Body of pancreas (tissue), 4 donors: ENCODE measurements at regions of chr4 and their contacts with region 1.

Region 1: GRCh38 chr4:3483471-3483921 is 20.4 kb downstream of the DOK7 start:
- DNase-seq: no peak
- ATAC-seq: no peak
- H3K4me3 ChIP-seq: no peak overlapping the region
- H3K27ac ChIP-seq: peak overlapping the region in 1 of 4 donors; percentile 16
- H3K4me1 ChIP-seq: peaks cover 22% of the 10 kb centered on the region
- H3K27me3 ChIP-seq: no peaks in the 10 kb centered on the region
- CTCF ChIP-seq: no peak
- POLR2A ChIP-seq: no peak

Region 2: DNA sequence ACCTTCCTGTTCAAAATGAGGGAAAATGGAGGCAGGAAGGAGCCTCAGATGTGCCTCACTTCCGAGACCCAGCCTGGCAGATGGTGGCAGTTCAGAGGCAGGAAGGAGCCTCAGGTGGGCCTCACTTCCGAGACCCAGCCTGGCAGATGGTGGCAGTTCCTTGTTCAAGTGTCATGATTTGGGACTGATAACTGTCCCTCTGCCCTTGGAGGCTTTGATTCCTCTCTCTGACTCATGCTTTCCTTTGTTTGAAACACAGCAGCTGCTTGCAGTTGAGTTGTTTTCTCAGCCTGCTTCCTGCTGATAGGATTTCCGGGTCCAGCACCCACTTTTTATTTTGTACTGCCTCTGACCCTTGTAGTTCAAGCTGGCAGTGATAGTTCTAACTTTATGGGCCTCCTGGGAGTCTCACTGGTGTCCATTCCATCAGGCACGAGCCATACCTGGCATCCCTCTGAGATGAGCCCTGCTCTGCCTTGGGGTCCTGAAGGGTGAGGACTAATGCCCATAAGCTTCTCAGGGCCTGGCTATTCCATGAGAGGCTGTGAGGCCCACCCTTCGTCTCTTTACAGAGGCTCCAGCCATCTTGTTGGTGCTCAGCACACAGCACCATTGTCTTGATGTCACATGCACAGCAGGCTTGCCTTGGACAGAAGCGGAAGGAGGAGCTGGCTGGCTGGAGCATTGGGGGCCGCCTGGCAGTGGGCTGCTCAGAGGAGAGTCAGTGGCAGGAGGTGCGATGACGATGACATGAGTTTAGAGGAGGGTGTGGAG is 177.7 kb before region 1 on chr4:
- intact Hi-C with region 1: no loop called
- DNase-seq: peak in 2 of 4 donors; percentile 5 to 28
- ATAC-seq: no peak
- H3K4me3 ChIP-seq: no peak overlapping the region
- H3K27ac ChIP-seq: peak overlapping the region in 1 of 4 donors; percentile 19
- H3K4me1 ChIP-seq: peaks cover 11% of the 10 kb centered on the region
- H3K27me3 ChIP-seq: no peaks in the 10 kb centered on the region
- CTCF ChIP-seq: no peak
- POLR2A ChIP-seq: no peak

Region 3: GRCh38 chr4:3344596-3344995 is 138.9 kb before region 1 on chr4:
- intact Hi-C with region 1: loop called (anchors 2 kb)
- DNase-seq: no peak
- ATAC-seq: no peak
- H3K4me3 ChIP-seq: no peak overlapping the region
- H3K27ac ChIP-seq: no peak overlapping the region
- H3K4me1 ChIP-seq: peaks cover 17% of the 10 kb centered on the region
- H3K27me3 ChIP-seq: no peaks in the 10 kb centered on the region
- CTCF ChIP-seq: no peak
- POLR2A ChIP-seq: no peak

Region 4: DNA sequence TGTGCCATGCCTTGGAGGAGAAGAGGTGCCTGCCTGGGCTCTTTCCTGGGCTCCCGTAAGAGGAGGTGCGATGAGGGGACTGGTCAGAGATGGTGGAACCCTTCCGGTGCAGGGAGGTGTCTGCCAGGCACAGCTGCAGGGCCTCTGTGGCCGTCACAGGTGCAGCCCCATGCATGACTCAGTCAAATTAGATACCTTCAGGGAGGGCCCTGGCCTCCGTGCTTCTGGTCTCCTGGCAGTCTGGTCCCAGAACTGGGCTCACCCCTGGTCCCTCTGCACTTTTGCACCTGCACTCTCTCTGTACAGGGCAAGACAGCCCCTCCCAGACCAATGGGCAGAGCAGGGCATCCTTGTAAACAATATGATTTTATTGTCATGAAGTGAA is 98.6 kb after region 1 on chr4:
- intact Hi-C with region 1: no loop called
- DNase-seq: no peak
- ATAC-seq: no peak
- H3K4me3 ChIP-seq: no peak overlapping the region
- H3K27ac ChIP-seq: no peak overlapping the region
- H3K4me1 ChIP-seq: no peaks in the 10 kb centered on the region
- H3K27me3 ChIP-seq: no peaks in the 10 kb centered on the region
- CTCF ChIP-seq: no peak
- POLR2A ChIP-seq: no peak

Region 5: GRCh38 chr4:4541661-4542570 is 1058.4 kb after region 1 on chr4 and contains the start of gene STX18:
- intact Hi-C with region 1: no loop called
- DNase-seq: peak; percentile 86 to 88 (median 86)
- ATAC-seq: peak; percentile 97
- H3K4me3 ChIP-seq: peak within 1 kb of the TSS; percentile 82 to 85
- H3K27ac ChIP-seq: peak within 1 kb of the TSS; percentile 25 to 85 (median 64)
- H3K4me1 ChIP-seq: peaks cover 32% of the 10 kb centered on the region
- H3K27me3 ChIP-seq: no peaks in the 10 kb centered on the region
- CTCF ChIP-seq: peak in 4 of 7 experiments; percentile 21 to 43 (median 26)
- POLR2A ChIP-seq: peak; percentile 65 to 89 (median 87)
- total RNA-seq, gene STX18: 13.5 to 53.4 TPM